ENCODE measurements at regions of chr13 and their contacts with region 1.

Region 1: DNA sequence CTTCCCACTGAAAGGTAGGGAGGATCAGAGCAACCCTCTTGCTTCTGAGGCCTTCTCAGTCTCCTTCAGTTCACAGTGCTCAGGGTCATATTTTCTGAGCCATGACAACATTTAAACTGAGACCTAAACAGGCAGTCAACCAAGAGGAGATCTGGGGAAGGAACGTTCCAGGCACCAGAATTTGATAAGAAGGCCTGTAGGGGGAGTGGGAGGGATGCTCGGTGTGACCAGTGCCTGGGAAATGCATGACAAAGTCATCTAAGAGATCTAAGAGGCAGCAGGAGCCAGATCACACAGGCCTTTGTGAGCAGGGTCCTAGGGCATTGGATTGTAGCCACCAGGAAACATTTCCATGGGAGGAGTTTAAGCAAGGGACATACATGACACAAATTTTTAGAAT is 71.6 kb downstream of the SHISA2 start:
- DNase-seq: peak; percentile 50
- H3K4me3 Mint-ChIP-seq: no peak overlapping the region
- H3K27ac Mint-ChIP-seq: no peak overlapping the region
- H3K4me1 Mint-ChIP-seq: peaks cover 19% of the 10 kb centered on the region
- H3K27me3 Mint-ChIP-seq: no peaks in the 10 kb centered on the region
- CTCF ChIP-seq: no peak

Region 2: DNA sequence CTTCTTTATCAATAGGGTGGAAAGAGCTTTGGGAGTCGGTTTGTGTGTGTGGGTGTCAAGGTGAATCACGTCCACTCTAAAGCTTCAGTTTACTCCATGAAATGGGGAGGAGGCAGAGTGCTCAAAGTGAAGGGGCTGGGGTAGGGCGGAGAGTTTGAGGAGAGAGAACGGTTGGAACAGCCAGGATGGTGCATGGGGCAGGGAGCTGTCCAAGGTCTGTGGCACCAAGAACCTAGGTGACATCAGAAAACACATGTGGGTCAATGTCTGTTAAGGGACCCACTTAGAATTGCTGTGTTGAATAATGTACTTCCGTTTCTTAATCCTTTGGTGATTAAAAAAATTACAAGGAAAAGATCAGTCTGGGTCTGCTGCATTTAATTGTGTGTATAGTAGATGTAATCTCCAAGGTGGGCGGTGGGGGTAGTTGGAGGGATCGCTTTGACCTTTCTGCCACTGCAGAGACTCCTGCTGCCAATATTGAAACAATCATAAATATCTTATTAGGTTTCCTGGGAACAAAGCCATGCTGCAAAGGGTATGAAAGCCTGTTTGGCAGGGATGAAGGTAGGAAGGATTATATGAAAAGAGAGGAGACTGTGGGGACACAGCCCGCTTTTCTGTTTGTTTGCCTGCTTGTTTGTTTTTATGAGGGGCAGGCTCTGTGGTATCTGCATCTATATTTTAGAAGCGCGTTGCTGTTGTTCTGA is 486.2 kb before region 1 on chr13:
- CTCF ChIA-PET with region 1: no interaction called
- intact Hi-C with region 1: no loop called
- DNase-seq: no peak
- H3K4me3 Mint-ChIP-seq: no peak overlapping the region
- H3K27ac Mint-ChIP-seq: no peak overlapping the region
- H3K4me1 Mint-ChIP-seq: no peaks in the 10 kb centered on the region
- H3K27me3 Mint-ChIP-seq: peaks cover 64% of the 10 kb centered on the region
- CTCF ChIP-seq: no peak

Region 3: GRCh38 chr13:26022538-26023292 is 42.5 kb after region 1 on chr13:
- CTCF ChIA-PET with region 1: no interaction called
- intact Hi-C with region 1: loop called (anchors 5 kb)
- DNase-seq: peak; percentile 83
- H3K4me3 Mint-ChIP-seq: no peak overlapping the region
- H3K27ac Mint-ChIP-seq: peak overlapping the region; percentile 66
- H3K4me1 Mint-ChIP-seq: peaks cover 68% of the 10 kb centered on the region
- H3K27me3 Mint-ChIP-seq: no peaks in the 10 kb centered on the region
- CTCF ChIP-seq: no peak

Region 4: DNA sequence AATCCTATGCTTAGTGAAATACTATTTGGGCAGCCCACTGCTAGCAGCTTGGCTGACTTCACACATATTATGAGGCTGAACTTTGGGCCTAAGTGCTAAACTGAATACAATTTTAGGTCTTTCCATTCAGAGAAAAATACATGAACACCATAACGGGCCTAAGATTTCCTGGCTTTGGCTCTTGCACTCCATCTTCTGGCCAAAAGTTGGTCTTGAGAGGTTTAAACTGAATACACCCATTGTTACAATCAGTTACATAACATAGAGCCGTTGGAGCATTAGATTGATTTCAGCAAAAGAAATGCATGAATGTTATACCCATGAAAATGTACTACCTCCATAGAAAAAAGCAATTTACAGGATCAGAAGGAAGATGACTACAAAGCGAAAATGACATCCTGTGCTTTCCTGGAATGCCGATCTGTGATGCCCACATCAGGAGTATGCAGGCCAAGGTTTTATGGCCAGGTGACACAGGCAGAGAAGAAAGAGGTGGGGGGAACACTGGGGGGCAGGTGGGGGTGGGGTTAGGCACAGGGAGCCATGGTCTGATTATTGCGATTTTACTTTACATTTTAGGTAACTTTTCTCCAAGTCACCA is 82.7 kb after region 1 on chr13:
- CTCF ChIA-PET with region 1: no interaction called
- intact Hi-C with region 1: loop called (anchors 5 kb)
- DNase-seq: peak; percentile 37
- H3K4me3 Mint-ChIP-seq: no peak overlapping the region
- H3K27ac Mint-ChIP-seq: no peak overlapping the region
- H3K4me1 Mint-ChIP-seq: no peaks in the 10 kb centered on the region
- H3K27me3 Mint-ChIP-seq: no peaks in the 10 kb centered on the region
- CTCF ChIP-seq: peak; percentile 23